T-cell (primary cell): ENCODE measurements at regions of chr13 and their contacts with region 1.

Region 1: DNA sequence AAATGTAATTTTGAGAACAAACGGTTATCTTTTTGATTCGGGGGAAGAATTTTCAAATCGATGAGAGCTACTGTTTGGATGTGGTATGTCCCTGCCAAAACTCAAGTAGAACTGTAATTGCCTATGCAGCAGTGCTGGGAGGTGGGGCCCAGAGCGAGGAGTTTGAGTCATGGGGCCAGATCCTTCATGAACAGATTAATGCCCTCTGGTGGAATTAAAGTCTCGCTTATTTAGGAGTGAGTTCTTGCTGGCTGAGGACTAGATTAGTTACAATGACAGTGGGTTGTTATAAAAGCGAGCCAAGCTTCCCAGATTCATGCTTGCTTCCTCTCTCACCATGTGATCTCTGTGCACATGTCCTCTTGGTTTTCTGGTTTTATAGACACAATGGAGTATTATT is 11.8 kb upstream of the PRR20A start:
- DNase-seq: no peak
- ATAC-seq: no peak
- H3K4me3 ChIP-seq: no peak overlapping the region
- H3K4me3 Mint-ChIP-seq: no peak overlapping the region
- H3K27ac ChIP-seq: no peak overlapping the region
- H3K27ac Mint-ChIP-seq: no peak overlapping the region
- H3K4me1 ChIP-seq: no peaks in the 10 kb centered on the region
- H3K4me1 Mint-ChIP-seq: no peaks in the 10 kb centered on the region
- H3K27me3 ChIP-seq: no peaks in the 10 kb centered on the region
- H3K27me3 Mint-ChIP-seq: no peaks in the 10 kb centered on the region

Region 2: DNA sequence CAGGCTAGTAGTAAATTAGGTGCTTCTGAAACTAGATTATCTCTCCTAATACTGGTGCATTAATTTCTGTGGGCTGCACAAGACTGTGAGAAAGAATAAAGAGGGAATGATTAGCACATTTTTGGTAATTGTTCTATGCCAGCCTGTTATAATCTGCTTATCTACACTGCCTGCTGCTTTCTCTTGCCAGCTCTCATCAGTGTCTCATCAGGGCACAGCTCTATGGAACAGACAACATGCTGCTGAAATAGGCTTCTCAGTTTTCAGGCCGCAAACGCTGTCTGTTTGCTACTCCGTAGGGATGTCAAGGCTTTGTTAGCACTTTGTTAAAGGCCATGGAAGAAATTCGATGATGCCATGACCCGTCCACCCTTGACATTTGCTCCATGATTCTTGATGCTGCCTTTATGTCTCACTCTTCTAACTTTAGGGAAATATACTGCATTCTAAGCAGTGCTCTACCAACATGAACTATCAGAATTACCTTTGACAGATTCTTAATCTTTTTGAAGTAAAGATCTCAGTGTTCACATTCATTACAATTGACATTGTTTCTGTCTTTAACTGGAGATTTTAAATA is 72.2 kb before region 1 on chr13:
- CTCF ChIA-PET with region 1: no interaction called
- POLR2A ChIA-PET with region 1: no interaction called
- DNase-seq: no peak
- ATAC-seq: no peak
- H3K4me3 ChIP-seq: no peak overlapping the region
- H3K4me3 Mint-ChIP-seq: no peak overlapping the region
- H3K27ac ChIP-seq: no peak overlapping the region
- H3K27ac Mint-ChIP-seq: no peak overlapping the region
- H3K4me1 ChIP-seq: no peaks in the 10 kb centered on the region
- H3K4me1 Mint-ChIP-seq: no peaks in the 10 kb centered on the region
- H3K27me3 ChIP-seq: no peaks in the 10 kb centered on the region
- H3K27me3 Mint-ChIP-seq: no peaks in the 10 kb centered on the region

Region 3: GRCh38 chr13:58869566-58869965 is 1740.7 kb after region 1 on chr13:
- CTCF ChIA-PET with region 1: no interaction called
- POLR2A ChIA-PET with region 1: interaction called in 1 of 2 experiments, 11 read pairs
- DNase-seq: no peak
- ATAC-seq: no peak
- H3K4me3 ChIP-seq: no peak overlapping the region
- H3K4me3 Mint-ChIP-seq: no peak overlapping the region
- H3K27ac ChIP-seq: no peak overlapping the region
- H3K27ac Mint-ChIP-seq: no peak overlapping the region
- H3K4me1 ChIP-seq: no peaks in the 10 kb centered on the region
- H3K4me1 Mint-ChIP-seq: no peaks in the 10 kb centered on the region
- H3K27me3 ChIP-seq: no peaks in the 10 kb centered on the region
- H3K27me3 Mint-ChIP-seq: no peaks in the 10 kb centered on the region